Breast epithelium (tissue), 4 donors: ENCODE measurements at regions of chr1 and their contacts with region 1.

Region 1: GRCh38 chr1:219359126-219359525 is 185.4 kb downstream of the LYPLAL1 start:
- DNase-seq: no peak
- H3K4me3 ChIP-seq: no peak overlapping the region
- H3K27ac ChIP-seq: no peak overlapping the region
- H3K4me1 ChIP-seq: no peaks in the 10 kb centered on the region
- H3K27me3 ChIP-seq: no peaks in the 10 kb centered on the region
- CTCF ChIP-seq: no peak
- POLR2A ChIP-seq: no peak

Region 2: GRCh38 chr1:218646266-218646665 is 712.9 kb before region 1 on chr1:
- intact Hi-C with region 1: loop called (anchors 5 kb)
- DNase-seq: no peak
- H3K4me3 ChIP-seq: no peak overlapping the region
- H3K27ac ChIP-seq: peak overlapping the region in 1 of 2 donors; percentile 62
- H3K4me1 ChIP-seq: no peaks in the 10 kb centered on the region
- H3K27me3 ChIP-seq: no peaks in the 10 kb centered on the region
- CTCF ChIP-seq: no peak
- POLR2A ChIP-seq: no peak

Region 3: DNA sequence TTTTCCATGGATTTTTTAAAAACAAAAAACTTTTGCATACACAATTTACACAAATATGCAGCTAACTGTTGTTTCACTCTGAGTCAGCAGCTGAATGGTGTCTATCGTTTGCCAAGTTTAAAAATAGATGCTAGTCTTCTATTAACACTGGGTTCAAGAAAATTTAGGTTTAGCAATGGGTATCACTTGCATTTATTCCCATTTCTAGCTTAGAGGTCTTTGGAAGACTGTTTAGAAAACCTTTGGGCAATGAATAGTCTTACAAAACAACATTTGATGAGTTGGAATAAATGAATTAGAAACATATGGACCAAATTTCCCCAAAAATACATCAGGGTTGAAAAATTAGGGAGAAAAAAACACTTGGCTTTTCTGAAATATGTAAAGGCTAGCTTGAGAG is 19.7 kb before region 1 on chr1:
- intact Hi-C with region 1: no loop called
- DNase-seq: no peak
- H3K4me3 ChIP-seq: no peak overlapping the region
- H3K27ac ChIP-seq: no peak overlapping the region
- H3K4me1 ChIP-seq: no peaks in the 10 kb centered on the region
- H3K27me3 ChIP-seq: no peaks in the 10 kb centered on the region
- CTCF ChIP-seq: no peak
- POLR2A ChIP-seq: no peak